Body of pancreas (tissue), 4 donors: ENCODE measurements at regions of chr7 and their contacts with region 1.

Region 1: DNA sequence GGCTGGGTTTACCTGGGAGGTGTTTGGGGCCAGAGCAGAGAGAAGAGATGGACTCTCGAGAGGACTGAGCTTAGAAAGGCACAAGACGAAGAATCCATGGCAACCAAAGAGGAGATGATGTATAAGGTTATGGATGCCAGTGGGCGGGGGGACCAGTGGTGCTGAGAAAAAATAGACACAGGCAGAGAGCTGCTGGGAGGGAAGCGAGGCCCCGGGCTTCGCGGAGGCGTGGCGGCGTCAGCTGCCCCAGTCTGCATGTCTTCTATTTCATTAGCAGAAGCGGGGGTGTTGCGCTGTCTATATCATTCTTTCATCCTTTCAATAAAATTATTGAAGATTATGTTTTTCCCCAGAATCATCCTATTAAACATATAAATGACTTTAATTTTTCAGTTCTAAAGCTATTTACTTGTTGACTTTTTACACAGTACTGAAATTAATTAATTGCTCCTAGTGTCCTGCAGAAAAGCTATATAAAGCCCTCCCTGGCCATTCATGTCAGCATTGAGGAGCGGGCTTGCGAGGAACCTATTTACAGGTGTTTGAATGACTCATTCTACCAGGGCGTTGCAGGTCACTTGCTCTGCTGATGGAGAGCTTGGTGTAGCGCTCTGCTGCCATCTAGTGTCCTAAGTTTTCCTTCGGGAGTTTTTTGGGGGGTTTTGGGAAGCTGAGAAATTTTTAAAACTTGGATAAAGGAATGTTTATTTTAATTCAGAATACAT is 42.9 kb upstream of the BHLHA15 start:
- DNase-seq: peak; percentile 80 to 90 (median 85)
- ATAC-seq: peak; percentile 68
- H3K4me3 ChIP-seq: no peak overlapping the region
- H3K27ac ChIP-seq: peak overlapping the region in 3 of 4 donors; percentile 22 to 83 (median 62)
- H3K4me1 ChIP-seq: peaks cover 72% of the 10 kb centered on the region
- H3K27me3 ChIP-seq: no peaks in the 10 kb centered on the region
- CTCF ChIP-seq: peak; percentile 84 to 95 (median 91)
- POLR2A ChIP-seq: no peak

Region 2: GRCh38 chr7:97959046-97959445 is 209.3 kb before region 1 on chr7:
- intact Hi-C with region 1: no loop called
- DNase-seq: no peak
- ATAC-seq: no peak
- H3K4me3 ChIP-seq: no peak overlapping the region
- H3K27ac ChIP-seq: no peak overlapping the region
- H3K4me1 ChIP-seq: no peaks in the 10 kb centered on the region
- H3K27me3 ChIP-seq: no peaks in the 10 kb centered on the region
- CTCF ChIP-seq: no peak
- POLR2A ChIP-seq: no peak

Region 3: GRCh38 chr7:98021588-98022351 is 146.6 kb before region 1 on chr7:
- intact Hi-C with region 1: loop called (anchors 5 kb)
- DNase-seq: peak; percentile 81 to 90 (median 84)
- ATAC-seq: peak; percentile 90
- H3K4me3 ChIP-seq: no peak overlapping the region
- H3K27ac ChIP-seq: no peak overlapping the region
- H3K4me1 ChIP-seq: no peaks in the 10 kb centered on the region
- H3K27me3 ChIP-seq: no peaks in the 10 kb centered on the region
- CTCF ChIP-seq: peak; percentile 89 to 98 (median 92)
- POLR2A ChIP-seq: no peak

Region 4: GRCh38 chr7:98102170-98102569 is 66.2 kb before region 1 on chr7:
- intact Hi-C with region 1: loop called (anchors 5 kb)
- DNase-seq: no peak
- ATAC-seq: no peak
- H3K4me3 ChIP-seq: no peak overlapping the region
- H3K27ac ChIP-seq: no peak overlapping the region
- H3K4me1 ChIP-seq: no peaks in the 10 kb centered on the region
- H3K27me3 ChIP-seq: no peaks in the 10 kb centered on the region
- CTCF ChIP-seq: no peak
- POLR2A ChIP-seq: no peak